Panc1 (cell line): ENCODE measurements at regions of chr5 and their contacts with region 1.

Region 1: DNA sequence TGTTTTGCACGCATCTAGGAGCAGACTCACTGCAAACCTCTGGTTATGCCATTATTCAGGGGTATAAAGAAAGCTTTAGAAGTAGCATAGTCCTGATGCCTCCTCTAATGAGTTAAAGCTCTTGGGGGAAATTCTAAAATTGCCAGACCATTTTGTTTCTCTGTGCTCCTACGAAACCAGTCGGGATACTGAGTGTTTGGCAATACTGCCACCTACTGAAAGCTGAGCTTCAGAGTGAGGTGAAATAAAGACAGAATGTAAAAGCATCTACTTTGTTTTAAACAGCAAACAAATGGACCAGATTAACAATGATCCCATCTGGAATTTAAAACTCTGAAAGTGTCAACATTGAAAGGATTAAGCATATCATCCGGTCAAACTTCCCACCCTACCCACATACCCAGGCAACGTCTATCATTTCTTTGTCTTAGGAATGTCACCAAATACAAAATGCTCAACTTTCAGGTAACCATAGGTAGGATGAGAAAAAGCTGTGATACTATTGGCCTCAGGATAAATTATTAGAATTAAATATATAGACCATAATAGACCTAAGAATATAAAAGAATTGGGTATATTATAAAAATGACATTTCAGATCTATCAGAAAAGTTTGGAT is 77.8 kb upstream of the SHISAL2B start:
- DNase-seq: peak; percentile 33
- ATAC-seq: peak; percentile 83
- H3K4me3 ChIP-seq: no peak overlapping the region
- H3K27ac ChIP-seq: no peak overlapping the region
- H3K4me1 ChIP-seq: no peaks in the 10 kb centered on the region
- H3K27me3 ChIP-seq: peaks cover 3% of the 10 kb centered on the region; the same call in 1 of the 2 replicates
- CTCF ChIP-seq: peak; percentile 81

Region 2: GRCh38 chr5:64074533-64074932 is 537.9 kb before region 1 on chr5:
- CTCF ChIA-PET with region 1: no interaction called
- POLR2A ChIA-PET with region 1: no interaction called
- in situ Hi-C with region 1: no loop called
- intact Hi-C with region 1: loop called (anchors 5 kb)
- DNase-seq: peak; percentile 15
- ATAC-seq: peak; percentile 79
- H3K4me3 ChIP-seq: no peak overlapping the region
- H3K27ac ChIP-seq: no peak overlapping the region
- H3K4me1 ChIP-seq: no peaks in the 10 kb centered on the region
- H3K27me3 ChIP-seq: no peaks in the 10 kb centered on the region
- CTCF ChIP-seq: peak; percentile 62; the same call in 1 of the 2 replicates

Region 3: DNA sequence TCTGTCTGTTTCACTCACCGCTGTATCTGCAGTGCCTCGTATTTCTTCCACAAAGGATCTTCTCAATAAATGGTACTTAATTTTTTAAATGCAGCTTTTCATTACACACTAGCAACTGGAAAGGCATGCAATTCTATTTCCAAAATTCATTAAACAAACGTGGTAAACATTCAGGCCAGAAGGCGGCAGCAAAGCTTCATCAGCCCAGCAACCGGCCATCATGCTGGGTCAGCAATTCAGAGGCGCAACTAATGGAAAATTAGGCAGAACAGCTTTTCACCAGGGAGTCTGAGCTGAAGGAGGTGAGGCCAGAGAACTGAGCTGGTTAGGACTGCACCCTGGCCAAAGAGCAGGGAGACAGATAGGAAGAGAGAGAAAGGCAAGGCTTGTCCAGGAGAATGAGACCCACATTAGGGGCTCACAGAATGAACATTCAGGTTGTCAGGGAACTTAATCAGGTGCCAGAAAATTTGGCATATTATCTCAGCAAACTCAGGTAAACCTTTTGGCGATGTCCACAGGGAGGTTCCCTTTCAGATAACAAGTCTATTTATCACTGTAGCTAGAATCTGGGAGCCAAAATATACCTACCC is 464.5 kb before region 1 on chr5:
- CTCF ChIA-PET with region 1: interaction called, 3 read pairs
- POLR2A ChIA-PET with region 1: no interaction called
- in situ Hi-C with region 1: no loop called
- intact Hi-C with region 1: loop called (anchors 5 kb)
- DNase-seq: peak; percentile 24
- ATAC-seq: peak; percentile 71; the same call in 1 of the 2 replicates
- H3K4me3 ChIP-seq: no peak overlapping the region
- H3K27ac ChIP-seq: no peak overlapping the region
- H3K4me1 ChIP-seq: no peaks in the 10 kb centered on the region
- H3K27me3 ChIP-seq: no peaks in the 10 kb centered on the region
- CTCF ChIP-seq: peak; percentile 90

Region 4: GRCh38 chr5:64229163-64229774 is 383.2 kb before region 1 on chr5:
- CTCF ChIA-PET with region 1: interaction called, 3 read pairs
- POLR2A ChIA-PET with region 1: no interaction called
- in situ Hi-C with region 1: no loop called
- intact Hi-C with region 1: loop called (anchors 1 kb)
- DNase-seq: no peak
- ATAC-seq: peak; percentile 65; the same call in 1 of the 2 replicates
- H3K4me3 ChIP-seq: no peak overlapping the region
- H3K27ac ChIP-seq: no peak overlapping the region
- H3K4me1 ChIP-seq: no peaks in the 10 kb centered on the region
- H3K27me3 ChIP-seq: no peaks in the 10 kb centered on the region
- CTCF ChIP-seq: peak; percentile 68

Region 5: DNA sequence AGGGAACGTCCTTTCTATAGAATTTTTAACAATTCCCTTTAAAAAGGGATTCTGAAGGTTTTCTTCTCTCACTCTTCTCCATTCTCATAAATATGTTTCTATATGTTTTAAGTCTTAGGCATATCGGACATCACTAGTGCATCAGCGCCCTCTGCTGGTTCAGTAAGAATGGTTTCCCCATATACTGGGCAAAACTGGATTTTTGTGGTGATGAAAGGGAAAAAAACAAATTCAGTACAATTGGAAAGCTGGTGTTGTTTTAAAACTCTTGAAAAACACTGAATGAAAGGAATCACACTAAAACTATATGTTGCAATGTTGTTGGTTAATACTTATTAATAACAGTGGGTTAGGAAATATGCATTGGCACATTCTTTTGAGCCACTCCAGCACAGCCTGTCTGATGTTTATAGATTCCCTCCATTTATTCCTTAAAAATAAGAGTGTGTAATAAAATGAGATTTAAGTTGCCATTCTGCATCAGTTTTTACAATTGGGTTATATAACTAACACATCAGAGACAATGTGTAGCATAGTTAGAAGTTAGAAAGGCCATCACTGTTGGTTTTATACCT is 172.1 kb after region 1 on chr5:
- CTCF ChIA-PET with region 1: interaction called, 11 read pairs
- POLR2A ChIA-PET with region 1: no interaction called
- in situ Hi-C with region 1: no loop called
- intact Hi-C with region 1: no loop called
- DNase-seq: no peak
- ATAC-seq: peak; percentile 84
- H3K4me3 ChIP-seq: no peak overlapping the region
- H3K27ac ChIP-seq: no peak overlapping the region
- H3K4me1 ChIP-seq: no peaks in the 10 kb centered on the region
- H3K27me3 ChIP-seq: no peaks in the 10 kb centered on the region
- CTCF ChIP-seq: peak; percentile 77; the same call in 1 of the 2 replicates